GM10248 (cell line): ENCODE measurements at regions of chr18 and their contacts with region 1.

Region 1: DNA sequence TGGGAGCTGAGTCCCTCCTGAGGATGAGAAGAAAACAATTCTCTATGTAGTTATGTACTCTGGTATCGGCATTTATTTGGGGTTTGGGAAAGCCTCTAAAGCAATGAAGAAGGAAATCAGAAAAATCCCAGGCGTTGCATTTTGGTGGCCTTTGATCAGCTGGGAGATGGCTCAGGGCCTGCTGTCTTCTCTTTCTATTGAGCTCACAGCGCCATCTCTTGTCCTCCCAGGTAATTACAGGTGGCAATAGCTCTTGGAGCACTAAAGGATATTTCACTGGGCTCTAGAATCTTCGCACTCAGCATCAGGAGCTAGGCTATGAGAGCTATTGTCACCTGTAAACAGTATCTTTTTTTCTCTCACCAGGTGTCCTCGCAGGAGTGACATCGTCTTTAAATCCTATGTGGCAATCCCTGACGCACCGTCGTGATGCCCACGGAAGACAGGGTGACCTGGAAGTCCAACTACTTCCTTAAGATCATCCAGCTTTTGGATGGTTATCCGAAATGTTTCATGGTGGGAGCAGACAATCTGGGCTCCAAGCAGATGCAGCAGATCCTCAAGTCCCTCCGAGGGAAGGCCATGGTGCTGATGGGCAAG is 76.1 kb upstream of the PMAIP1 start:
- DNase-seq: peak; percentile 53
- CTCF ChIP-seq: peak; percentile 85

Region 2: DNA sequence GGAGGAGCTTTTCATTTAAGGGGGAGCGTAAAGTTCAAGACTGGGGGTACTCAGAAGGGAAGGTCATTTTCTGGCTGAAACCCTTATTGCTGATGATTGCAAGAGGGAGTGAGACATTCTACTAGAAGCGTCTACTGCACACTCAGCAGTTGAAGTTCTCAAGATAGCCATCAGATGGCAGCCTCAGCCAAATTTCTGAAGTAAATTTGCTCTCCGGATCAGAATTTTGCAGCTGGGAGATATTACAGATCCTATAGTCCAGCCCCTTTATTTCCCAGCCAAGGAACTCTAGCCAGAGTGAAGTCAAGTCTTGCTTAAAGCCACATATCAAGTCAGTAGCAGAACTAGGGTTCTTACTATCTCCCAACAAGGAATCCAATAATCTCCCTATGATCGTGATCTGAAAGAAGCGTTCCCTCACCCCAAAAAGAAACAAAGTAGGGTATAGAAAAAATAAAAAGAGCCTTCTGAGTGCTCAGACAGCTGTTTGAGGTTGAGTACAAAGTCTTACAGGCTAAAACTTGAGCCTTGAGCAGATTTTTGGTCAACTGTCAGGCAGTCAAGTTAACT is 574.4 kb before region 1 on chr18:
- CTCF ChIA-PET with region 1: interaction called, 18 read pairs
- POLR2A ChIA-PET with region 1: no interaction called
- DNase-seq: peak; percentile 60
- CTCF ChIP-seq: peak; percentile 66

Region 3: DNA sequence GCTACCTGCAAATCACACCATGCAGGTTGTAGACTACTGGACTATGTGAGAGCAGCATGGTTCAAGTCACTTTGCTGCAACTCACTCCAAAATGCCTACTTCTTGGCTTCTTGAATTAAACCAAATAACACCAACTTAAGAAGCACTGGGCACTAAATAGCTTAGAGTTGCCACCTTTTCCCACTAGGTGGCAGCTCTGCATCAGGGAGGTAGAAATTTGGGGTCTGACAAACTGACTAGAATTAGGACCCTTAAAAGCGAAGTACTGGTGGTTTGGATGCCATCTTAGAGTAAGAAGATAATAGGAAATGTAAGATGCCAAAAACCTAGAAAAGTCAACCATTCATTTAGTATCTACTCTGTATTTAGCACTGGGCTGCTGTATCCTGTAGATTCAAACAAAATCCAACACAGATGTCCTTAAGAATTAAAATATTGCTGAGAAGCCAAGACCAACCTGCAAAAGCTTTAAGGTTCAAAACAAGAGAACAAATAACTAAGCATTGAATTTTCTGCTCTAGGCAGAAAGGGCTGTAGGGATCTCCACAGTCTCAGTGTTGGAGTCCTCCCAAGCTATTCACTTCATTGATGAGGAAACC is 192.0 kb before region 1 on chr18:
- CTCF ChIA-PET with region 1: interaction called, 77 read pairs
- POLR2A ChIA-PET with region 1: no interaction called
- DNase-seq: peak; percentile 21
- CTCF ChIP-seq: peak; percentile 61

Region 4: DNA sequence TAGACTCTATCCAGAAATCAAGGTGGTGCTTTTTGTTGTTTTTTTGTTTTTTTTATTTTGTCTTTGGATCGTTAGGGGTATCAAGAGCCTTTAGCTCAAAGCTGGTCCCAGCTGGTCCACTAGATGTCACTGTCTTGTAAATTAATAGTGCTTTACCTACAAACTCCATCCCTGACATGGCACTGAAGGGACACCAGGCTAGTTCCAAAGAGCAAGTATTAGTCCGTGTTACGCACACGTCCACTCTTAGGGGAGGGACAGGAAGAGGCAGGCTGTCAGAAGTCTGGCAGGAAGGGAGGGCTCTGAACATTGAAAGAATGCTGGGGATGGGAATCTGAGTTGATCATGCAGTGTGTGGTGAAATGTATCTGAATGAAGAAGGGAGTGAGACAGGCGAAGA is 40.6 kb before region 1 on chr18:
- CTCF ChIA-PET with region 1: interaction called, 68 read pairs
- POLR2A ChIA-PET with region 1: no interaction called
- DNase-seq: peak; percentile 59
- CTCF ChIP-seq: peak; percentile 77

Region 5: GRCh38 chr18:59837586-59837985 is 13.9 kb after region 1 on chr18:
- CTCF ChIA-PET with region 1: interaction called, 56 read pairs
- POLR2A ChIA-PET with region 1: no interaction called
- DNase-seq: peak; percentile 72
- CTCF ChIP-seq: peak; percentile 92

Region 6: DNA sequence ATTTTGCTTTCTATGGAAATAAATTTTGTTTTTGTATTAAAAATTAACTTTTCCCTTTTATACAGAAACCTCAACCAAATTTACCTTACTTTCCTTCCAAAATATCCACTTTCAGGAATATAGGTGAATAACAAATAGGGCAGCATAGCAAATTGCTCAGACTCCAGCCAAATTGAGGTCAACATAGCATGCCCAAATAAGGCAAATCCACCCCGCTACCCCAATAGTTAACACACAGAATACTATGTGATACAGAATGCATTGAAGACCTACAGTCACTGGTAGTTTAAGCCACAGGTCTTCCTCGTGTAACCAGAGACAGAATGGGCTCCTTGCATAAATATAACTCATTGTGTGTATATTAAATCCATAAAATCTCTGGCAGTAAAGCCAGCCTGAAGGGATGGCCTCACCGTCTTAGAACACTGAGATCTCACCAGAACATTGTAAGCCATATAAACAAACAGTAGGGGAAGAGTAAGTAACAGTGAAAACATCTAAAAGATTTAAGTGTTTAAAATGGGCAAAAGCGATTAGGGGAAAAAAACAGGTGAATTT is 148.3 kb after region 1 on chr18:
- CTCF ChIA-PET with region 1: no interaction called
- POLR2A ChIA-PET with region 1: no interaction called
- DNase-seq: no peak
- CTCF ChIP-seq: no peak